Activated CD8-positive, alpha-beta T cell treated with anti-CD3 and anti-CD28 coated beads for 36 hours (primary cell): ENCODE measurements at regions of chr3 and their contacts with region 1.

Region 1: DNA sequence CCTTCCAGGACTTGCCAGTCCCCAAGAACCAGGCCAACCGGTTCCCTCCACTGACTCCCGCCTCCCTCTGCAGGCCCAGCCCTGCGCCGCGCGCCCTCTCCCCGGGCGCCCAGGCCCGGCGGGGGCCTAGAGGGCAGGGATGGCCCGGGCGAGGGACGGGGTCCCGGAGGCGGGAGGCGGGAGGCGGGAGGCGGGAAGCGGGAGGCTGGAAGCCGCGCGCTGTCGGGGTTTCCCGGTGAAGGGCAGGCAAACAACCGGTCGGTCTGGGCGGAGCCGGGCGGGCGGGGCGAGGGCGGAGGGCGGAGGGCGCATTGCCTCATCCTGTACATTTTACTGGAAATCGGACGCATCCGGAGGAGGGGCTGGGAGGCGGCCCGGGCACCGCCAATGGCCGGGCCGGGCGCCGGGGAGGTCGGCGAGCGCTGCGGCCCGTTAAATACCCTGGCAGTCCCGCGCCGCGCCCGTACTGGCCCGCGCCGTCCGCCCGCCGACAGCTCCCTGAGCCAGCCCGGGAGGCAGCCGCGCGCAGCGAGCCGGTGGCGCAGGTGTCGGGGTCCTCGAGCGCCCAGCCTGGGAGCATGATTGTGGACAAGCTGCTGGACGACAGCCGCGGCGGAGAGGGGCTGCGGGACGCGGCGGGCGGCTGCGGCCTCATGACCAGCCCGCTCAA is at the start of gene NFKBIZ:
- DNase-seq: peak; percentile 96
- ATAC-seq: peak; percentile 80
- H3K4me3 Mint-ChIP-seq: peak within 1 kb of the TSS; percentile 87
- H3K27ac Mint-ChIP-seq: peak within 1 kb of the TSS; percentile 96
- H3K4me1 Mint-ChIP-seq: peaks cover 44% of the 10 kb centered on the region
- H3K27me3 Mint-ChIP-seq: no peaks in the 10 kb centered on the region
- CTCF ChIP-seq: no peak
- total RNA-seq, gene NFKBIZ: 62.1 to 70.6 TPM

Region 2: GRCh38 chr3:101819758-101820157 is 29.4 kb before region 1 on chr3:
- CTCF ChIA-PET with region 1: interaction called, 8 read pairs
- POLR2A ChIA-PET with region 1: interaction called, 27 read pairs
- intact Hi-C with region 1: loop called (anchors 5 kb)
- DNase-seq: no peak
- ATAC-seq: peak; percentile 66
- H3K4me3 Mint-ChIP-seq: no peak overlapping the region
- H3K27ac Mint-ChIP-seq: peak overlapping the region; percentile 63
- H3K4me1 Mint-ChIP-seq: peaks cover 51% of the 10 kb centered on the region
- H3K27me3 Mint-ChIP-seq: no peaks in the 10 kb centered on the region
- CTCF ChIP-seq: no peak

Region 3: DNA sequence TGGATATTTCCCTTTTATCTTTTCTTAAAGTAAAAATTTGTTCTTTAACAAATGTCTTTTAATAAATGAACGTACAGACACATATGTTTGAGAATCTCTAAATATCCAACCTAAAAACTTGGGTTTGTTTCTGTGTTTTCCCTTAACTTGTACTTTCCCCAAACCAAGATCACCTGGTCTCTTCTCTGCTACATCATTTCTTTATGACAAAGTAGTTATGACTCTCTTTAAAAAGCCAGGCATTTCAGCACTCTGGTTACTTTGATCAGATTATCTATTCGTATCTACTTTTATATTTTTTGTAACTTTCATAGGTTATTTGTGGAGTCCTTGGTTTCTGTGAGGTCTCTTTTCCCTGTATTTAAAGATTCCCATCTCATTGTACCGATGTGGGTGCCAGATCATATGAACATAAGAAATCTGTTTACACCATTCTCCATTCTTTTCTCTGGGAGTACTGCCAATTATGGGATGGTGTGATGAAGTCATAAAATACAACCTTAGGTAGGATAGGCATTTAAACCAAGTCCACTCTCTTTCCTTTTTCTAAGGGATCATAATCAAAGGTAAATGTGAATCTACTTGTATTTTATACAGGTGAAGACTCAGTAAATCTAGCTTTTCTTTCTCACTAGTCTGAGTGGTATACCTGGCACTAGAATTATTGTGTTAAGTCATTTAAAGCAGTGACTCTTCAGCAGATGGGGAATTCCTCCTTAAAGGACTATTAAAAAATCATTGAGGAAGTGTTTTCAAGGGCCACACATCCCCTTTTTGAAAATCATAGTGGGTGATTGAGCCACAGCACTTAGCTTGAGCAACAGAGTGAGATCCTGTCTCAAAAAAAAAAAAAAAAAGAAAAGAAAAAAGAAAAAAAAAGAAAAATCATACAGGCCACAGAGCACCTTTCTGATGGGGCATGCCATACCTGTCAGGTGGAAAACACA is 12.3 kb before region 1 on chr3:
- CTCF ChIA-PET with region 1: interaction called, 9 read pairs
- POLR2A ChIA-PET with region 1: interaction called, 36 read pairs
- intact Hi-C with region 1: no loop called
- DNase-seq: no peak
- ATAC-seq: no peak
- H3K4me3 Mint-ChIP-seq: no peak overlapping the region
- H3K27ac Mint-ChIP-seq: no peak overlapping the region
- H3K4me1 Mint-ChIP-seq: peaks cover 63% of the 10 kb centered on the region
- H3K27me3 Mint-ChIP-seq: no peaks in the 10 kb centered on the region
- CTCF ChIP-seq: no peak

Region 4: GRCh38 chr3:101936419-101937356 is 87.5 kb after region 1 on chr3:
- CTCF ChIA-PET with region 1: interaction called, 3 read pairs
- POLR2A ChIA-PET with region 1: interaction called, 6 read pairs
- intact Hi-C with region 1: loop called (anchors 10 kb)
- DNase-seq: peak; percentile 33
- ATAC-seq: peak; percentile 88
- H3K4me3 Mint-ChIP-seq: peak overlapping the region; percentile 2
- H3K27ac Mint-ChIP-seq: peak overlapping the region; percentile 79
- H3K4me1 Mint-ChIP-seq: peaks cover 34% of the 10 kb centered on the region
- H3K27me3 Mint-ChIP-seq: peaks cover 2% of the 10 kb centered on the region
- CTCF ChIP-seq: no peak

Region 5: GRCh38 chr3:102089904-102090492 is 240.8 kb after region 1 on chr3:
- CTCF ChIA-PET with region 1: no interaction called
- POLR2A ChIA-PET with region 1: interaction called, 6 read pairs
- intact Hi-C with region 1: loop called (anchors 2 kb)
- DNase-seq: no peak
- ATAC-seq: no peak
- H3K4me3 Mint-ChIP-seq: no peak overlapping the region
- H3K27ac Mint-ChIP-seq: no peak overlapping the region
- H3K4me1 Mint-ChIP-seq: peaks cover 45% of the 10 kb centered on the region
- H3K27me3 Mint-ChIP-seq: no peaks in the 10 kb centered on the region
- CTCF ChIP-seq: no peak

Region 6: DNA sequence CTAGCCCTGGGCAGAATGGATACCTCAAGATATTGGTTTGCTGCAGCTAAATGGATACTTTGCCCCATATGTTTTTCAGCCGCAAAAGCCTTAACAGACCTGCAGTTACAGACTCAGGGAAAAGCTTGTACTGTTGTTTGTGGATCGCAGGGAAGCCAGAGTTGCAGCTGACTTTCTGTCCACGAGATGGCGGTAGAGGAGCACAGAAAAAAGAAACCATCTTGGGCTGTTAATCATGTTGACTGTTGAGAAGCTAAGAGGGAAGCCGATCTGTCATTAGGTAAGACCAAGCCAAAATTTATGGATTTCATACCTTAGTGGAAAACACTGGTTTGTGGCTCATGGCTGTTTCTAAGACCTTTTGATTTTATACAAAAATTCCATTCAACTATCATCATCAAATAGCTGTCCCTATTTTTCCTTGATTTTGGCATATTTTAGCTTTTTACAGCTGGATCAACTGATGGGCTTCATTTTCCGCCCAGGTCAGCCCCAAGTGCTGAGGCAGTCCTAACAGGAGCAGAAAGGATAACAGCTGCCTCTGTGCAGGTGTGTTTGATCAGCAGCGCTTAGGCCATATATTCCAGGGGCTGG is 380.0 kb after region 1 on chr3:
- CTCF ChIA-PET with region 1: interaction called, 19 read pairs
- POLR2A ChIA-PET with region 1: interaction called, 3 read pairs
- intact Hi-C with region 1: loop called (anchors 10 kb)
- DNase-seq: peak; percentile 84
- ATAC-seq: peak; percentile 86
- H3K4me3 Mint-ChIP-seq: no peak overlapping the region
- H3K27ac Mint-ChIP-seq: no peak overlapping the region
- H3K4me1 Mint-ChIP-seq: peaks cover 9% of the 10 kb centered on the region
- H3K27me3 Mint-ChIP-seq: no peaks in the 10 kb centered on the region
- CTCF ChIP-seq: peak; percentile 86